CD4-positive, alpha-beta memory T cell (primary cell): ENCODE measurements at regions of chr5 and their contacts with region 1.

Region 1: GRCh38 chr5:157540707-157541446 is 34.7 kb downstream of the ADAM19 start:
- DNase-seq: peak; percentile 53 to 75 (median 62)
- H3K4me3 ChIP-seq: peak overlapping the region; percentile 12 to 40
- H3K4me3 Mint-ChIP-seq: peak overlapping the region; percentile 71 to 90 (median 80)
- H3K27ac ChIP-seq: peak overlapping the region; percentile 77
- H3K27ac Mint-ChIP-seq: peak overlapping the region; percentile 89 to 95 (median 93)
- H3K4me1 ChIP-seq: peaks cover 95% of the 10 kb centered on the region
- H3K4me1 Mint-ChIP-seq: peaks cover 73 to 94% (median 84%) of the 10 kb centered on the region in 4 donors
- H3K27me3 ChIP-seq: no peaks in the 10 kb centered on the region
- H3K27me3 Mint-ChIP-seq: no peaks in the 10 kb centered on the region

Region 2: GRCh38 chr5:157431544-157432200 is 109.2 kb before region 1 on chr5:
- CTCF ChIA-PET with region 1: no interaction called
- POLR2A ChIA-PET with region 1: no interaction called
- intact Hi-C with region 1: loop called (anchors 5 kb)
- DNase-seq: peak; percentile 49 to 63 (median 59)
- H3K4me3 ChIP-seq: no peak overlapping the region
- H3K4me3 Mint-ChIP-seq: peak overlapping the region in 4 of 8 donors; percentile 17 to 65 (median 42)
- H3K27ac ChIP-seq: no peak overlapping the region
- H3K27ac Mint-ChIP-seq: peak overlapping the region in 6 of 7 donors; percentile 3 to 83 (median 77)
- H3K4me1 ChIP-seq: peaks cover 4% of the 10 kb centered on the region
- H3K4me1 Mint-ChIP-seq: peaks cover 5 to 7% (median 5%) of the 10 kb centered on the region in 4 donors
- H3K27me3 ChIP-seq: no peaks in the 10 kb centered on the region
- H3K27me3 Mint-ChIP-seq: no peaks in the 10 kb centered on the region

Region 3: GRCh38 chr5:157558041-157558595 is 17.2 kb after region 1 on chr5:
- CTCF ChIA-PET with region 1: interaction called, 6 read pairs
- POLR2A ChIA-PET with region 1: interaction called, 31 read pairs
- intact Hi-C with region 1: no loop called
- DNase-seq: no peak
- H3K4me3 ChIP-seq: no peak overlapping the region
- H3K4me3 Mint-ChIP-seq: peak overlapping the region in 4 of 8 donors; percentile 5 to 38 (median 12)
- H3K27ac ChIP-seq: no peak overlapping the region
- H3K27ac Mint-ChIP-seq: peak overlapping the region in 6 of 7 donors; percentile 56 to 84 (median 72)
- H3K4me1 ChIP-seq: peaks cover 89% of the 10 kb centered on the region
- H3K4me1 Mint-ChIP-seq: peaks cover 66 to 88% (median 80%) of the 10 kb centered on the region in 4 donors
- H3K27me3 ChIP-seq: no peaks in the 10 kb centered on the region
- H3K27me3 Mint-ChIP-seq: no peaks in the 10 kb centered on the region

Region 4: DNA sequence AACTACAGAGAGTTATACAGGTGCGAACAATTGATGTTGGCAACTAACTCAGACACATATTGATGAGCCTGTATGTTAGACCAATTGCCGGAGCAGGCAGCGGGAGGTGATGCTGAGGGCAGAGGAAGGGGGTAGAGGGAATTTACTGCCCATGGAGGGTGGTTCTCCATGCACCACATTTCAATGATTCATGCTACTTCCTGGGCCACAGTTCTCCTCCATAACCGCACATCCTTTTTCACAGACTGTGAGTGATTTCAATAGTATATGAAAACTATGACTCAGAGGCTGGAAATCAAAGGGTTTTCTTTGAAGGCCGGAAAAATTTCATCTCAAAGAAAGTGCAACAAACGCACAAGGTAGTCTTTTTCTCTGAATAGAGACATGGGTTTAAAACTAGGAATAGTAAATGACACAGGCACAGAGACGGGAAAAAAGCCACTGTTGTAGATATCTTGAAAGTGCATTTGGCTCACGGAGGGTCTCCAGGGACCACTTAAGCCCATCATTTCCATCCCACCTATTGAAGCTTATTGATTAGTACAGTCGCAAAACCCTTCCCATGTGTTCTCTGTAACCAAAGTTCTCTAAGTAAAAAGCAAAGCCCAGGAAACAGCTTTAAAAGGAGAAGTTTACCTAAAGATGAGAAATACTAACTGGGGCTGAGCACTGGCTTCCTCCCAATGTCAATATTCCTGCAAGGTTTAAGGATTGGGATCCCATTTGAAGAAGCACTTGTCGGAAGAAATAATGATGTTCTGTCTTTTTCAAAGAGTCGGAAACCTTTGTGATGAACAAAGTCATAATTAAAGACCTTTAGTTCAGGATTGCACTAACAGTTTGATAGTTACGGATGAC is 62.7 kb after region 1 on chr5:
- CTCF ChIA-PET with region 1: interaction called, 3 read pairs
- POLR2A ChIA-PET with region 1: interaction called, 9 read pairs
- intact Hi-C with region 1: loop called (anchors 1 kb)
- DNase-seq: peak; percentile 72 to 93 (median 75)
- H3K4me3 ChIP-seq: no peak overlapping the region
- H3K4me3 Mint-ChIP-seq: peak overlapping the region; percentile 39 to 84 (median 70)
- H3K27ac ChIP-seq: peak overlapping the region; percentile 68
- H3K27ac Mint-ChIP-seq: peak overlapping the region; percentile 84 to 96 (median 86)
- H3K4me1 ChIP-seq: peaks cover 90% of the 10 kb centered on the region
- H3K4me1 Mint-ChIP-seq: peaks cover 45 to 69% (median 60%) of the 10 kb centered on the region in 4 donors
- H3K27me3 ChIP-seq: no peaks in the 10 kb centered on the region
- H3K27me3 Mint-ChIP-seq: no peaks in the 10 kb centered on the region

Region 5: GRCh38 chr5:157651623-157652549 is 111.0 kb after region 1 on chr5 and contains the start of gene SOX30:
- CTCF ChIA-PET with region 1: interaction called, 8 read pairs
- POLR2A ChIA-PET with region 1: interaction called, 17 read pairs
- intact Hi-C with region 1: loop called (anchors 1 kb)
- DNase-seq: peak; percentile 85 to 89 (median 86)
- H3K4me3 ChIP-seq: peak within 1 kb of the TSS in 1 of 2 donors; percentile 51
- H3K4me3 Mint-ChIP-seq: peak within 1 kb of the TSS; percentile 78 to 89 (median 84)
- H3K27ac ChIP-seq: peak within 1 kb of the TSS; percentile 52
- H3K27ac Mint-ChIP-seq: peak within 1 kb of the TSS; percentile 65 to 91 (median 86)
- H3K4me1 ChIP-seq: peaks cover 18% of the 10 kb centered on the region
- H3K4me1 Mint-ChIP-seq: peaks cover 11 to 26% (median 18%) of the 10 kb centered on the region in 4 donors
- H3K27me3 ChIP-seq: no peaks in the 10 kb centered on the region
- H3K27me3 Mint-ChIP-seq: no peaks in the 10 kb centered on the region
- total RNA-seq, gene SOX30: 0.14 to 0.15 TPM

Region 6: DNA sequence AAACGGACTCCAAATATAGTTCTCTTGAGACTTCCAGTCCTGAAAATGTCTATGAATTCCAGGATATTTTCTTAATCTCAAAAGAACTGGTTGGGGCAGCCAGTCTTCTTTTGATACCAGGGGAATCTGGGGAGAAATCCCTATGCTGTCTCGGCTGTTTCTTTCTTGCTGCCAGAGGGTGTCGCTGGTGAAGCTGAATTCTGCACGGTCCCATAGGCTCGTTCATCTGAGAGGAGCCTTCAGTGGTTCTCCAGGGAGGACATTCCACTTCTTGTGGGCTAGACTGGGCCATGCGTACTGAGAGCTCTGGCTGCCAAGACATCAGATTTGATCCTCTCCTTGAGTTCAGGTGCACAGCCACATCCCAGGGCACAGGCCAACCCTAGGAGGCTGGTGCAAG is 473.1 kb after region 1 on chr5:
- CTCF ChIA-PET with region 1: no interaction called
- POLR2A ChIA-PET with region 1: no interaction called
- intact Hi-C with region 1: no loop called
- DNase-seq: no peak
- H3K4me3 ChIP-seq: no peak overlapping the region
- H3K4me3 Mint-ChIP-seq: no peak overlapping the region
- H3K27ac ChIP-seq: no peak overlapping the region
- H3K27ac Mint-ChIP-seq: no peak overlapping the region
- H3K4me1 ChIP-seq: no peaks in the 10 kb centered on the region
- H3K4me1 Mint-ChIP-seq: no peaks in the 10 kb centered on the region
- H3K27me3 ChIP-seq: no peaks in the 10 kb centered on the region
- H3K27me3 Mint-ChIP-seq: peaks cover 17 to 21% of the 10 kb centered on the region in 2 donors

Region 7: GRCh38 chr5:158054223-158055110 is 513.6 kb after region 1 on chr5:
- CTCF ChIA-PET with region 1: no interaction called
- POLR2A ChIA-PET with region 1: no interaction called
- intact Hi-C with region 1: no loop called
- DNase-seq: no peak
- H3K4me3 ChIP-seq: no peak overlapping the region
- H3K4me3 Mint-ChIP-seq: no peak overlapping the region
- H3K27ac ChIP-seq: no peak overlapping the region
- H3K27ac Mint-ChIP-seq: no peak overlapping the region
- H3K4me1 ChIP-seq: no peaks in the 10 kb centered on the region
- H3K4me1 Mint-ChIP-seq: no peaks in the 10 kb centered on the region
- H3K27me3 ChIP-seq: no peaks in the 10 kb centered on the region
- H3K27me3 Mint-ChIP-seq: peaks cover 7 to 19% of the 10 kb centered on the region in 2 donors